Posterior vena cava (tissue), 2 donors: ENCODE measurements at regions of chr3 and their contacts with region 1.

Region 1: DNA sequence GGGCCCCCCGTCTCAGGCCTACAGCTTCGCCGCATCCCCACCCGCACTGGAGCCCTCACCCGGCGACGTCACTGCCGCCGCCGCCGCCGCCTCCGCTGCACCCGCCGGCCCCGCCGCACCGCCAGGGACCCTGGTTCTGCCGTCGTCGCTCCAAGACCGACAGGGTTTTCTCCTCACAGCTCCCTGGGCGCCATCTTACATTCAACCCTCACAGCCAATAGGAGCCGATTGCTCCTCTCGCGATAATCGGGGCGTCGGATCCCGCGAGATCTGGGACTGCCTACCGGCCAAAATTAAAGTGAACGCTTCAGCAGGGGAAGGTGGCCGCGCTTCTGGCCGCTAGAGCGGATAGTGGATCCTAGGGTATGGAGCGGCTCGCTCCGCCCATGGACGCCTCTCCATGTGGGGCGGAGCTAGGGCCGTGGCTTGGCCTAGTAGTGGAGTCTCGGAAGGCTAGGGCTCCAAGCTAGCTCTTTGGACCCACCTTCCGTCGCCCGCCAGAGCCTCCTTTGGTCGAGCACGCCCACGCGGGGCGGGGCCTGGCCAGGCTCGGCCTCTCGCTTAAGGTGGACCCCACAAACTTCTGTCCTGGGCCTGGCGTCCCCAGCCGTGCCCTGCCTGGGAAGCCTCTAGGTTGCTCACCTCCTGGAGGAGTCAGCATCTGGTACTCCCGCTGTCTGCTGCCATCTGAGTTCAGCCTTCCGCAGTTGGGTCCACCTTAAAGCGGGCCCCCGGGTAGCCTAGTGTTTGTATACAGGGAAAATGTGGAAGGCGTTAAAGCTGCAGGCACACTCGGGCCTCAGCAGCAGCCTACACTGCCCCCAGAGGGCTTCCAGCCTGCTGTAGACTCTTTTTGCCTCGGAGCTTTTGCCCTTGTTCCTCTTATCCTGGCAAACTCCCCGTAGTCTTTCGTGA is at the start of gene QRICH1:
- DNase-seq: peak; percentile 99
- total RNA-seq, gene QRICH1: 73.4 to 93.2 TPM

Region 2: DNA sequence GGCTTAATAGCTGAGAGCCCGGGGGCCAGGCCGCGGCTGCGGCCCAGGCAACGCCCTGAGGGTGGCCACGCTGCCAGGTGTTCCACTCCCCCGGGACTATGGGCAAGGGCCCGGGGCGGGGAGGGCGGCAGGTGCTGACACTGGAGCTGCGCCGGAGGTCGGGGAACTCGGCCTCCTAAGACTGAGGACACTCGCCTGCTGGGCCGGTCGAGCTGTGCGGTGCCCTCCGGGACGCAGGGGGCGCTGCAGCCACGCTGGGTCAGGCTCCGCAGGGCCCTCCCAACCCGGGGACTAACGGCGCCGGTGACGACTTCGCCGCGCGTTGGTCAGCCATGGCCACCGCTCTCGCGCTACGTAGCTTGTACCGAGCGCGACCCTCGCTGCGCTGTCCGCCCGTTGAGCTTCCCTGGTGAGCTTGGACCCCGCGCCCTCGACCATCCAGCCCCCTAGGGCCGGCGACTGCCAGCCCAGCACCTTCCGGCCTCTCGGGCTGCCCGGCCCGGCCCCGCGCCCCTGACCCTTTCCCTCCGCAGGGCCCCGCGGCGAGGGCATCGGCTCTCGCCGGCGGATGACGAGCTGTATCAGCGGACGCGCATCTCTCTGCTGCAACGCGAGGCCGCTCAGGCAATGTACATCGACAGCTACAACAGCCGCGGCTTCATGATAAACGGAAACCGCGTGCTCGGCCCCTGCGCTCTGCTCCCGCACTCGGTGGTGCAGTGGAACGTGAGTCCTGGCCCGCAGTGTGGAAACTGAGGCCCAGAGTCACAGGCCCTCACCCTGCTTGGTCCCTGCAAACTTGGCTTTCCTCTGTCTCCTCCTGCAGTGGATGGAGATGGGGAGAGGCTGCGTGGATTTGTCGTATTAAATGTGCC is 72.1 kb before region 1 on chr3 and contains the start of gene NDUFAF3:
- intact Hi-C with region 1: loop called in 1 of 2 experiments (anchors 5 kb)
- DNase-seq: peak; percentile 98
- total RNA-seq, gene NDUFAF3: 57.8 to 62.0 TPM

Region 3: DNA sequence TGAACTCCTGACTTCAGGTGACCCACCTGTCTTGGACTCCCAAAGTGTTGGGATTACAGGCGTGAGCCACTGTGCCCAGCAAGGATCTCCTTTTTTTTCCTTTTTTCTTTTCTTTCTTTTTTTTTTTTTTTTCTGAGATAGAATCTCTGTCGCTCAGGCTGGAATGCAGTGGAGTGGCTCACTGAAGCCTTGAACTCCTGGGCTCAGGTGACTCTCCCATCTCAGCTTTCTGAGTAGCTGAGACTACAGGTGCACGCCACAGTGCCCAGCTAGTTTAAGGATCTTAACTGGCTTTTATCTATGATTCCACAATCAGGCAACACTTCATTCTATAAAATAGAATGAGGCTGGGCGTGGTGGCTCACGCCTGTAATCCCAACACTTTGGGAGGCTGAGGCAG is 351.3 kb after region 1 on chr3:
- intact Hi-C with region 1: loop called in 1 of 2 experiments (anchors 10 kb)
- DNase-seq: no peak